ENCODE measurements at regions of chr7 and their contacts with region 1.

Region 1: DNA sequence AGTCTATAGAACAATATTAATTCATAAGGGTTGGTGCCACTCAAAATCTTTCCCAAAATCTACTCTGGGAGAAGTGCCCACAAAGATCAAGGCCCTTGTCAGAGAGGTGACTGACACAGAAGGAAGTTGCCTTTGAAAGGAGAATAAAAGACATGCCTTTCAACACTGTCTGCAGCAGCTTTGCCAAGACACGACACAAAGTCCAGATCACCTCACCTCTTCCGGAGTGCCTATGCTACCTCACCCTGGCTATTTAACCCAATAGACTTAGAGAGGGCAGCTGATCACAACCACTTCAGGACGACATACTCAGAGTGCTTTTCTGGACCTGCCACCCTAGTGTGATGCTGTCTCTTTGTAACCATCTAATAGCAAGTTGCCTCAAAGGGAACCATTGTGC is 49.0 kb upstream of the YAE1 start:
- DNase-seq: no peak
- H3K4me3 Mint-ChIP-seq: no peak overlapping the region
- H3K27ac Mint-ChIP-seq: no peak overlapping the region
- H3K4me1 Mint-ChIP-seq: no peaks in the 10 kb centered on the region
- H3K27me3 Mint-ChIP-seq: peaks cover 22% of the 10 kb centered on the region
- CTCF ChIP-seq: no peak

Region 2: GRCh38 chr7:38796626-38797501 is 720.4 kb before region 1 on chr7:
- CTCF ChIA-PET with region 1: interaction called, 7 read pairs
- POLR2A ChIA-PET with region 1: no interaction called
- intact Hi-C with region 1: loop called (anchors 1 kb)
- DNase-seq: peak; percentile 64
- H3K4me3 Mint-ChIP-seq: no peak overlapping the region
- H3K27ac Mint-ChIP-seq: no peak overlapping the region
- H3K4me1 Mint-ChIP-seq: no peaks in the 10 kb centered on the region
- H3K27me3 Mint-ChIP-seq: no peaks in the 10 kb centered on the region
- CTCF ChIP-seq: peak; percentile 78

Region 3: GRCh38 chr7:38932509-38933168 is 584.6 kb before region 1 on chr7:
- CTCF ChIA-PET with region 1: interaction called, 5 read pairs
- POLR2A ChIA-PET with region 1: no interaction called
- intact Hi-C with region 1: loop called (anchors 1 kb)
- DNase-seq: peak; percentile 65
- H3K4me3 Mint-ChIP-seq: no peak overlapping the region
- H3K27ac Mint-ChIP-seq: no peak overlapping the region
- H3K4me1 Mint-ChIP-seq: peaks cover 7% of the 10 kb centered on the region
- H3K27me3 Mint-ChIP-seq: peaks cover 57% of the 10 kb centered on the region
- CTCF ChIP-seq: peak; percentile 82

Region 4: GRCh38 chr7:39073432-39073831 is 443.8 kb before region 1 on chr7:
- CTCF ChIA-PET with region 1: no interaction called
- POLR2A ChIA-PET with region 1: no interaction called
- intact Hi-C with region 1: loop called (anchors 1 kb)
- DNase-seq: no peak
- H3K4me3 Mint-ChIP-seq: no peak overlapping the region
- H3K27ac Mint-ChIP-seq: no peak overlapping the region
- H3K4me1 Mint-ChIP-seq: no peaks in the 10 kb centered on the region
- H3K27me3 Mint-ChIP-seq: peaks cover 86% of the 10 kb centered on the region
- CTCF ChIP-seq: no peak

Region 5: DNA sequence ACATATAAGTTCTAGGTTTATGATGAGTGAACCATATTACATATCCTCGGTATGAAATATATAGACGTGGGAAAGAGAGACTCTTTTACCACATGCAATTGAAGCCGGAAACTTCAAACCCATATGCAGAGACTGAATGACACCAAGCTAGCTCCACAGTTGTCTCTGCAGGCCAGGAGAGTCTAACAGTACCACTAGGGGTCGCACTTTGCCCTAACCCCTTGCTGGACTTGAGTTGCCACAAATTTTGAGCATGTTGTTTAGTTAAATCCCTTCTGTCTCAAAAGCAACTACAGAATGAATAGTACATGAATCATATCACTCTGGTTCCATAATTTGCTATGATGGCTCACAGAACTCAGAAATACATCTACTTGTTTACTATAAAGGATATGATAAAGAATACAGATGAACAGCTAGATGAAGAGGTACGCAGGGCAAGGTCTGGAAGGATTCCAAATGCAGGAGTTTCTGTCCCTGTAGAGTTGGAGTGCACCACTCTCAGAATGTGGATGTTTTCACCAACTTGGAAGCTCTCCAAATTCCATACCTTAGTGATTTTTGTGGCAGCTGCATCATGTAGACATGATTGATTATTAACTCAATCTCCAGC is 63.4 kb before region 1 on chr7:
- CTCF ChIA-PET with region 1: interaction called, 3 read pairs
- POLR2A ChIA-PET with region 1: no interaction called
- intact Hi-C with region 1: loop called (anchors 1 kb)
- DNase-seq: peak; percentile 74
- H3K4me3 Mint-ChIP-seq: no peak overlapping the region
- H3K27ac Mint-ChIP-seq: no peak overlapping the region
- H3K4me1 Mint-ChIP-seq: no peaks in the 10 kb centered on the region
- H3K27me3 Mint-ChIP-seq: peaks cover 61% of the 10 kb centered on the region
- CTCF ChIP-seq: peak; percentile 54